ENCODE measurements at regions of chr6 and their contacts with region 1.

Region 1: DNA sequence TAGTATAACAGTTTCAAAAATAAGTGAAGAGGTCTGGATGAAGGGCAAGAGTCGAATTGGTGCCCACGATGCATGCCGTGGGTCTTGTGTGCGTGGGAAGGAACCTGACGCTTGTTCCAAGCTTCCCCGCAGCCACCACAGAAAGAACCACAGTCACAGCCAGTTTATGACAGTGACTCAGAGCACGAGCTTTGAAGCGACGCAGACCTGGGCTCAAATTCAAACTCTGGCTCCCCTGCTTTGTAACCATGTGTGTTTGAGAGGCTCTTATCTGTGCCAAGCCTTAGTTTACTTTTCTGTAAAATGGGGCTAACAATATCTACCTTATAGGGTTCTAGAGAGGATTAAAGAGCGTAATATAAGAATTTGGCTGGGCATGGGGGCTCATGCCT is 65.5 kb downstream of the SYNJ2 start:
- DNase-seq: peak in 7 of 10 donors; percentile 33 to 76 (median 51)
- ATAC-seq: peak; percentile 58 to 61
- H3K4me3 Mint-ChIP-seq: peak overlapping the region; percentile 46 to 88 (median 73)
- H3K27ac Mint-ChIP-seq: peak overlapping the region; percentile 67 to 96 (median 91)
- H3K4me1 Mint-ChIP-seq: peaks cover 22 to 32% (median 27%) of the 10 kb centered on the region in 4 donors
- H3K27me3 Mint-ChIP-seq: no peaks in the 10 kb centered on the region

Region 2: DNA sequence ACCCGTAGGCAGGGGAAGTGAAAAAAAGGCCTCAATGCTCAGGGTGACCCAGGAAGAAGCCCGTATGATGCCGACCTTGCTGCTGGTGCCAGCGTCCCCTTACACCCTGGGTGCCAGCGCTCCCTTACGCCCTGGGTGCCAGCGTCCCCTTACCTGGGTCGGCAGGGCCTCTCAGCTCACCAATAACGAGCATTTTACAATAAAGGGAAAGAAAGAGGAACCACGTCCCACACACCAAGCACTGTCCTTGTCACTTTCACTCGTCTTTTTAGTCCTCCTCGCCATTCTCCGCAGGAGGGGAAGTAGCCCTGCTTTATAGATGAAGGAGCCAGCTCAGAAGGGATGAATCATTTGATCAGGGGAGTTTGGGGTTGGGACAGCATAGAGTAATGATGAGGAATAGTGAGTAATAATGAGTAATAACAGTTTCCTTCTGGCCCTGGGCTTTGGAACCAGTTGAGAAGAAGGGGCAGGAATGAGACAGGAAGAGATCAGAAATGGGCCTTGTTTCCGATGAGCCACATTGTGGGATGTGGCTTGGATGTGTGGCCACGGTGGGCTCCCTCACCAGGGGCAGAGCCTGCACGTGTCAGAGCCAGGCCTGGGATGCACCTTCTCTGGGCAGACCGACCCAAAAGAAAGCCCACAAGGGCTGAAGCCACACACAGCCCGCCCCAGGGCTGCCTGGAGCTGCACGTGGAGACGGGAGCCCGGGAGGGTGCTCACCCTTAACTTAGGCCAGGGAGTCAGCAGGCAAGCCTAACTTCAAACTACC is 10.3 kb after region 1 on chr6:
- POLR2A ChIA-PET with region 1: interaction called, 38 read pairs
- DNase-seq: no peak
- ATAC-seq: no peak
- H3K4me3 Mint-ChIP-seq: peak overlapping the region in 1 of 10 donors; percentile 49
- H3K27ac Mint-ChIP-seq: peak overlapping the region in 7 of 10 donors; percentile 5 to 85 (median 46)
- H3K4me1 Mint-ChIP-seq: peaks cover 8 to 27% (median 23%) of the 10 kb centered on the region in 4 donors
- H3K27me3 Mint-ChIP-seq: no peaks in the 10 kb centered on the region

Measured in naive thymus-derived CD8-positive, alpha-beta T cell (primary cell).